ENCODE measurements at regions of chr1 and their contacts with region 1.

Region 1: GRCh38 chr1:236603991-236604904 is at the start of gene HEATR1:
- DNase-seq: peak; percentile 94 to 96
- H3K4me3 ChIP-seq: peak within 1 kb of the TSS; percentile 68
- H3K4me3 Mint-ChIP-seq: peak within 1 kb of the TSS; percentile 79
- H3K27ac Mint-ChIP-seq: peak within 1 kb of the TSS; percentile 85
- H3K4me1 ChIP-seq: no peaks in the 10 kb centered on the region
- H3K4me1 Mint-ChIP-seq: peaks cover 7% of the 10 kb centered on the region
- H3K27me3 ChIP-seq: no peaks in the 10 kb centered on the region
- H3K27me3 Mint-ChIP-seq: no peaks in the 10 kb centered on the region
- CTCF ChIP-seq: no peak
- total RNA-seq, gene HEATR1: 54.8 and 56.5 TPM in 2 replicates

Region 2: GRCh38 chr1:235992868-235993267 is 611.4 kb before region 1 on chr1:
- CTCF ChIA-PET with region 1: no interaction called
- POLR2A ChIA-PET with region 1: interaction called, 13 read pairs
- intact Hi-C with region 1: no loop called
- DNase-seq: no peak
- H3K4me3 ChIP-seq: no peak overlapping the region
- H3K4me3 Mint-ChIP-seq: no peak overlapping the region
- H3K27ac Mint-ChIP-seq: no peak overlapping the region
- H3K4me1 ChIP-seq: 0 out of 2 replicates have a peak, but pooled peaks cover 5% of the 10 kb centered on the region
- H3K4me1 Mint-ChIP-seq: peaks cover 5% of the 10 kb centered on the region
- H3K27me3 ChIP-seq: no peaks in the 10 kb centered on the region
- H3K27me3 Mint-ChIP-seq: no peaks in the 10 kb centered on the region
- CTCF ChIP-seq: no peak

Region 3: GRCh38 chr1:236534151-236534651 is 70.0 kb before region 1 on chr1:
- CTCF ChIA-PET with region 1: no interaction called
- POLR2A ChIA-PET with region 1: interaction called, 13 read pairs
- intact Hi-C with region 1: no loop called
- DNase-seq: no peak
- H3K4me3 ChIP-seq: no peak overlapping the region
- H3K4me3 Mint-ChIP-seq: no peak overlapping the region
- H3K27ac Mint-ChIP-seq: no peak overlapping the region
- H3K4me1 ChIP-seq: peaks cover 14% of the 10 kb centered on the region; the same call in 1 of the 2 replicates
- H3K4me1 Mint-ChIP-seq: peaks cover 13% of the 10 kb centered on the region
- H3K27me3 ChIP-seq: no peaks in the 10 kb centered on the region
- H3K27me3 Mint-ChIP-seq: no peaks in the 10 kb centered on the region
- CTCF ChIP-seq: no peak

Region 4: GRCh38 chr1:236774926-236775325 is 170.7 kb after region 1 on chr1:
- CTCF ChIA-PET with region 1: no interaction called
- POLR2A ChIA-PET with region 1: no interaction called
- intact Hi-C with region 1: loop called (anchors 1 kb)
- DNase-seq: peak in 1 of 2 experiments; percentile 23
- H3K4me3 ChIP-seq: no peak overlapping the region
- H3K4me3 Mint-ChIP-seq: no peak overlapping the region
- H3K27ac Mint-ChIP-seq: no peak overlapping the region
- H3K4me1 ChIP-seq: no peaks in the 10 kb centered on the region
- H3K4me1 Mint-ChIP-seq: no peaks in the 10 kb centered on the region
- H3K27me3 ChIP-seq: no peaks in the 10 kb centered on the region
- H3K27me3 Mint-ChIP-seq: peaks cover 17% of the 10 kb centered on the region
- CTCF ChIP-seq: peak; percentile 44 to 53

Region 5: GRCh38 chr1:236795035-236795756 is 190.9 kb after region 1 on chr1 and contains the start of gene MTR:
- CTCF ChIA-PET with region 1: interaction called, 5 read pairs
- POLR2A ChIA-PET with region 1: interaction called, 9 read pairs
- intact Hi-C with region 1: loop called (anchors 1 kb)
- DNase-seq: peak; percentile 97 to 98
- H3K4me3 ChIP-seq: peak within 1 kb of the TSS; percentile 95
- H3K4me3 Mint-ChIP-seq: peak within 1 kb of the TSS; percentile 97
- H3K27ac Mint-ChIP-seq: peak within 1 kb of the TSS; percentile 97
- H3K4me1 ChIP-seq: no peaks in the 10 kb centered on the region
- H3K4me1 Mint-ChIP-seq: peaks cover 5% of the 10 kb centered on the region
- H3K27me3 ChIP-seq: no peaks in the 10 kb centered on the region
- H3K27me3 Mint-ChIP-seq: no peaks in the 10 kb centered on the region
- CTCF ChIP-seq: no peak
- total RNA-seq, gene MTR: 22.9 and 26.3 TPM in 2 replicates

Region 6: GRCh38 chr1:236868625-236869467 is 264.6 kb after region 1 on chr1:
- CTCF ChIA-PET with region 1: no interaction called
- POLR2A ChIA-PET with region 1: no interaction called
- intact Hi-C with region 1: loop called (anchors 1 kb)
- DNase-seq: peak in 1 of 2 experiments; percentile 58
- H3K4me3 ChIP-seq: no peak overlapping the region
- H3K4me3 Mint-ChIP-seq: no peak overlapping the region
- H3K27ac Mint-ChIP-seq: no peak overlapping the region
- H3K4me1 ChIP-seq: no peaks in the 10 kb centered on the region
- H3K4me1 Mint-ChIP-seq: no peaks in the 10 kb centered on the region
- H3K27me3 ChIP-seq: no peaks in the 10 kb centered on the region
- H3K27me3 Mint-ChIP-seq: no peaks in the 10 kb centered on the region
- CTCF ChIP-seq: peak; percentile 84 to 95

Region 7: GRCh38 chr1:237386362-237387143 is 782.3 kb after region 1 on chr1:
- CTCF ChIA-PET with region 1: interaction called, 4 read pairs
- POLR2A ChIA-PET with region 1: no interaction called
- intact Hi-C with region 1: loop called (anchors 1 kb)
- DNase-seq: no peak
- H3K4me3 ChIP-seq: no peak overlapping the region
- H3K4me3 Mint-ChIP-seq: no peak overlapping the region
- H3K27ac Mint-ChIP-seq: no peak overlapping the region
- H3K4me1 ChIP-seq: no peaks in the 10 kb centered on the region
- H3K4me1 Mint-ChIP-seq: no peaks in the 10 kb centered on the region
- H3K27me3 ChIP-seq: no peaks in the 10 kb centered on the region
- H3K27me3 Mint-ChIP-seq: peaks cover 3% of the 10 kb centered on the region
- CTCF ChIP-seq: peak; percentile 47 to 51